Left cardiac atrium (tissue), 4 donors: ENCODE measurements at regions of chr18 and their contacts with region 1.

Region 1: GRCh38 chr18:23131693-23132319 is 3.5 kb upstream of the CABLES1 start:
- DNase-seq: peak; percentile 59
- ATAC-seq: peak; percentile 46 to 56

Region 2: GRCh38 chr18:22946846-22947245 is 185.0 kb before region 1 on chr18:
- intact Hi-C with region 1: no loop called
- DNase-seq: no peak
- ATAC-seq: no peak

Region 3: DNA sequence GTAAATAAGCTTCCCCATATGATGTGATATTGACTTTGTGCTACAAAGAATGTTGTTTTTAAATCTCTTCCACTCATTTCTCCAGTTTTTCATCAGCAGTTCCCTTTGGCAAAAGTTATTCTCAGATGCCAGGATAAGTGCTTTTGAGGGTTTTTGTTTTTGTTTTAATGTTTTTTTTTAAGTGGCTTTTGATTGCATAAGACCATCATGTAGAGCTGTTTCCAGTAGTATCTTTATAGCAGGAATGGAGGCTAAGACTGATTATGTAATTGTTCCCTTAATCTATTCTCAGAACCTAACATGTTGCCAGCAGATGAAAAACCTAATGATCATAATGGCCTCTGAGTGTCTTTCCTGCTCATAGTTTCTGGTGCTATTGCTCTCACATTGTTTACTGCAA is 81.4 kb after region 1 on chr18:
- intact Hi-C with region 1: no loop called
- DNase-seq: no peak
- ATAC-seq: no peak

Region 4: DNA sequence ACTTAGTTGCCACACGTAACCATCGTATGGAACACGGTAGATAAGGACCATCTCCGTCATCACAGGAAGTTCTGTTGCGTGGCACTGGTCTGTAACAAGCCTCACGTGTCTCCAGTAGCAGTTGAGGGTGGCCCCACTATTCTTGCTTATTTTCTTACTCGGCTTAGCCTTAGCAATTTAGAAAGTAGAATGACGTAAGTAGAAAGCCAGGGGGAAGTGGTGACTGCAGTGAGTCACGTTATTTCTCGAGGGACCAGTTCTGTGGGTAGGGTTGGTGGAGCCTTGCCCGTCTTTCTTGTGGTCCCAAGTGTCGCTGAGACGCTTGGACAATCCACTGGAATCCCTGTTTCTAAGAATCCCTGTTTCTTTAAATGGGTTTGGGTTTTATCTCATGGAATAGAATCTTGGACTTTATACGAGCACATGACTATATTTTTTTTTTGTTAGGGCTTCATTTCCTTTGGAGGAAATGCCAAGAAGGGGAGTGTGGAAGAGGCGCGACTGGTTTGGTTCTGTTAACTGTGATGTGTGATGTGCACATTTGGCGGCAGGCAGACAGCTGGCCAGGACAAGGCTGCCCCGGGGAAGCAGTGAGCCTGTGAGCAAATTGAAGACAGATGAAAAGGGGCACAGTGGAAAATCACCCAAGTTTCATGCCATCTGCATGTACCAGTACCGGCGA is 99.7 kb after region 1 on chr18:
- intact Hi-C with region 1: loop called in 1 of 2 experiments (anchors 10 kb)
- DNase-seq: peak; percentile 75
- ATAC-seq: peak; percentile 71 to 87

Region 5: GRCh38 chr18:23357996-23358594 is 226.3 kb after region 1 on chr18:
- intact Hi-C with region 1: loop called (anchors 1 to 5 kb)
- DNase-seq: peak; percentile 79
- ATAC-seq: peak; percentile 78 to 82

Region 6: DNA sequence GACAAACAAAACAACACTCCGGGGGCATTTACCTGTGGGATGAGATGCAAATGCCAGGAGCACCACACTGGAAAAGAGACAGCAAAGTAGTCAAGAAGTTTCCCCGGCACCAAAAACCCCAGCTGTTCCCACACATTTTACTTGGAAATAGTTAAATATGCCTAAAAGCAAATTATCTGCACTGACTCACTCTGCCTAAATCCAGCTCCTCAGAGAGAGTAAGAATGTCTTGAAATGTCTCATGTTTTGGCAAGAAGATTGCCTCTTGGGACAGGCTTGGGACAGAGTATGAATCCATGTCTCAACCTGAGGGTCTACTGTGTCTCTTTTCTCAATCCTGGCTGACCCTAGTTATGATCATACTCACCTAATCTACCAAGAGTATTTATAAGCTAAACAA is 233.8 kb after region 1 on chr18:
- intact Hi-C with region 1: loop called in 1 of 2 experiments (anchors 5 kb)
- DNase-seq: no peak
- ATAC-seq: peak; percentile 87 to 94

Region 7: DNA sequence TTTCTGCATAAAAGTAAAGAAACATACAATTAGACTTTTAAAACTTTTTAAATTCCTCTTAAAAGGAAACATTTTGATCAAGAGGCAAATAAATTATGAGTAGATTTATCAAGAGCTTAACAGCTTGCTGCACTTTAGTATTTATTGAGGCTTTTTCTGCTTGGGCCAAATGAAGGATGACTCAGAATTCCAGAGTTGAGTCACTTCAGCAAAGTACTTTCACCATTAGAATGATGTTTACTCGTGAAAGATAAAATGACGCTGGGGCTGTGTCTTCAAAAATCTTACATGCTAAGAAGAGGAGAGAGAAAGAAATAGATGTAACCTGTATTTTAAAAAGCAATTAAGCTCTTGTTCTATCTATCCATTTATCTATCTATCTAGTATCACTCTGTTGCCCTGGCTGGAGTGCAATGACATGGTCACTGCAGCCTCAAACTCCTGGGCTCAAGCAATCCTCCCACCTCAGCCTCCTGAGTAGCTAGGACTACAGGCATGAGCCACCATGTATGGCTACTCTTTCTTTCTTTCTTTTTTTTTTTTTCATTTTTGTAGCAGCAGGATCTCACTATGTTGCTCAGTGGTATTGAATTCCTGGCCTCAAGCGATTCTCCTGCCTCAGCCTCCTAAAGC is 246.0 kb after region 1 on chr18:
- intact Hi-C with region 1: loop called in 1 of 2 experiments (anchors 5 kb)
- DNase-seq: no peak
- ATAC-seq: peak; percentile 51 to 78

Region 8: DNA sequence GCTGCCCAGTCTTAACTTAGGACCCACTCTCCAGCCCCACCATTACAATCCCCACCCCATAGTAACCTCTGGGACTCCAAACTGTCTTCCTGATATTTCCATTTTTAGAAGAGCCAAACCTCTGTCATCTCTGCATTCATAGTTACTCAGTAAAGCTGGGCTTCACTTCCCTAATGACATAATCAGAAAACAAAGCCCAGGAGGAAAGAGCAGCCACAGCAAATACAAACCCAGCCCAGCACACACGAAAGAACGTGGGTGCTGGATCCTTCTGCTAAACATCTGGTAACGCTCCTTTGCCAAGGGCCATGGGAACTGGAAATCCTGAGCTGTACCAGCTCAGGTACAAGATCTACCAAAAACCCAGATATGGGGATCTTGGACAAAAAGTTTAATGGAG is 284.5 kb after region 1 on chr18:
- intact Hi-C with region 1: loop called in 1 of 2 experiments (anchors 5 kb)
- DNase-seq: no peak
- ATAC-seq: peak in 1 of 2 donors; percentile 27